ENCODE measurements at regions of chr1 and their contacts with region 1.

Region 1: DNA sequence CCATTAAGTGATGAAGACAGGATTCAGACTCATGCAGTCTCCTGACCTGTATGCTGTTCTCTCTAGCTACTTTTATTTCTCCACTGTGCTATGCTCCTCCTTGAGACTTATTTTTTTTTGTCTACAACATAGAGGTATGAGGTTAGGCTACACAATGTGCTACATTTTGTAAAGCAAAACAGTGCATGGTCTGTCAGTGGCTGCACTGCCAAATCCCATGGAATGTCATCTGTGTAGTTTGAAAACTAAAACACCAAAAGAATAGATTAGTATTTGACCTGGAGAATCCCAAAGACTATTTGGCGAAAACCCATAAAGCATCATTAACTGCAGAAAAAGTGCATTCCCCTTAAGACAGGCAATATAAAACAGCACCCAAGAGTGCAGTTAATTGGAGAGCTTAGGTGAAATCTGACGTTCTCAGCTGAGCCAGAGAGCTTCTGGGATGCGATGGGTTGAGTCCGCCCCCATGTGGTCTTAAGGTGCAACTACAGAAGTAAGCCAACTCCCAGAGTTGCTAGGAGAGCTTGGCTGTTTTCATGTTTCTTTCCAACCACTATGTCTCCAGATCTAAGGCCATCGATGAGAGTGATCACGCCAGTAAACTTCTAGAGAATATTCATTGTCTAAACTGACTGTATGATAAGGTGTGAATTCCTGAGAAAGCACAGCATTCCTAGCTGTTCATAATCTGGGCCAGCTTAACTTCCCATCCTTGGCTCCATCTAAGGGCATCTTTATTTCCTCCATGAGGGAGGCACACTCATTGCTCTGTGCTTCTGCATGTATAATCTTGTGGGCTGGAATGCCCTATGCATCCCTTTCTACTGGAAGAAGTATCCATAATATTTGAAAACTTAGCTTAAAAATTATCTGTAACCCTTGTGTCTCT is 20.7 kb upstream of the CYP2J2 start:
- DNase-seq: peak; percentile 46
- ATAC-seq: peak; percentile 94
- H3K4me3 ChIP-seq: no peak overlapping the region
- H3K27ac ChIP-seq: no peak overlapping the region
- H3K4me1 ChIP-seq: no peaks in the 10 kb centered on the region
- H3K27me3 ChIP-seq: peaks cover 14% of the 10 kb centered on the region; the same call in 1 of the 2 replicates
- CTCF ChIP-seq: peak; percentile 94

Region 2: GRCh38 chr1:59779949-59780348 is 167.3 kb before region 1 on chr1:
- CTCF ChIA-PET with region 1: no interaction called
- POLR2A ChIA-PET with region 1: interaction called, 8 read pairs
- in situ Hi-C with region 1: no loop called
- intact Hi-C with region 1: loop called (anchors 5 kb)
- DNase-seq: no peak
- ATAC-seq: no peak
- H3K4me3 ChIP-seq: no peak overlapping the region
- H3K27ac ChIP-seq: no peak overlapping the region
- H3K4me1 ChIP-seq: no peaks in the 10 kb centered on the region
- H3K27me3 ChIP-seq: no peaks in the 10 kb centered on the region
- CTCF ChIP-seq: peak; percentile 33

Region 3: DNA sequence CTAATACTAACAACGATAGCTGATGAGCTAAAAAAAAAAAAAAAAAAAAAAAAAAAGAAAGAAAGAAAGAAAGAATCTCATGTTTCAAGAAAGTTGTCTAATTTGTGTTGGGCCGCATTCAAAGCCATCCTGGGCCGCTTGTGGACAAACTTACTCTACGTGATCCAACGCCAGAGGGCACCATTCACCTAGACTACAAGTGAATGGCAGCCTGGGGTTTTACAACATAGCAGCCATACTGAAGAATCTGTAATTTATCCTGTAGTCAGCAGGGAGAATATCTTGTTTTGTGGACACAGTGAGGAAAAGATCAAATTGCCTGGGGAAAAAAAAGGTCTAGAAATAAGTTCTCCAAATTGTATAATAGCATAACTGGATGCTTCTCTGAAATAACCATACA is 67.7 kb before region 1 on chr1:
- CTCF ChIA-PET with region 1: interaction called, 30 read pairs
- POLR2A ChIA-PET with region 1: no interaction called
- in situ Hi-C with region 1: no loop called
- intact Hi-C with region 1: loop called (anchors 1 kb)
- DNase-seq: peak; percentile 32
- ATAC-seq: peak; percentile 88
- H3K4me3 ChIP-seq: no peak overlapping the region
- H3K27ac ChIP-seq: no peak overlapping the region
- H3K4me1 ChIP-seq: no peaks in the 10 kb centered on the region; the same call in 1 of the 2 replicates
- H3K27me3 ChIP-seq: no peaks in the 10 kb centered on the region
- CTCF ChIP-seq: peak; percentile 71

Region 4: GRCh38 chr1:59892841-59893811 is 54.2 kb before region 1 on chr1:
- CTCF ChIA-PET with region 1: no interaction called
- POLR2A ChIA-PET with region 1: no interaction called
- in situ Hi-C with region 1: no loop called
- intact Hi-C with region 1: no loop called
- DNase-seq: no peak
- ATAC-seq: no peak
- H3K4me3 ChIP-seq: no peak overlapping the region
- H3K27ac ChIP-seq: no peak overlapping the region
- H3K4me1 ChIP-seq: no peaks in the 10 kb centered on the region
- H3K27me3 ChIP-seq: no peaks in the 10 kb centered on the region; the same call in 1 of the 2 replicates
- CTCF ChIP-seq: no peak

Region 5: DNA sequence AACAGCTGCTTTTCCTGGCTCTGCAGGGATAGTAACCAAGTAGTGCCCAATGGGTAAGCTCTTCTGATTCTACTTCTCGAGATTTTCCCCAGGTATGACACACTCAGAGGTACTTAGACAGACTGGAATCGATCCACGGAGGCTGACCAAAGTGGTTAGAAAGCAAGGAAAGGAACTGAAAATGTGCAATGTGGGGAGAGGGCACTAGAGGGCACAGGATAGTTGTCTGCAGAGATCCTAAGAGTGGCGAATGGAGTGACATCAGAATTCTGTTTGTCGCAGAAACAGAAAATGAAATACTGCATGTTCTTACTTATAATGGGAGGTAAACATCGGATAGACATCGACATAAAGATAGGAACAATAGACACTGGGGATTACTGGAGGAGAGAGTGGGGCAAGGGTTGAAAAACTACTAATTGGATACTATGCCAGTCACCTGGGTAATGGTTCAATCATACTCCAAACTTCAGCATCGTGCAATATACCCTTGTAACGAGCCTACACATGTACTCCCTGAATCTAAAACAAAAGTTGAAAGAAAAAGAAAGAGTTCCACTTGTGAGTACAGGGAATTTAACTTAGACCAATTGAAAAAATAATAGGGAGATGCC is 44.0 kb before region 1 on chr1:
- CTCF ChIA-PET with region 1: interaction called, 5 read pairs
- POLR2A ChIA-PET with region 1: no interaction called
- in situ Hi-C with region 1: no loop called
- intact Hi-C with region 1: loop called (anchors 2 kb)
- DNase-seq: peak; percentile 15
- ATAC-seq: peak; percentile 75; the same call in 1 of the 2 replicates
- H3K4me3 ChIP-seq: no peak overlapping the region
- H3K27ac ChIP-seq: no peak overlapping the region
- H3K4me1 ChIP-seq: no peaks in the 10 kb centered on the region
- H3K27me3 ChIP-seq: peaks cover 6% of the 10 kb centered on the region
- CTCF ChIP-seq: peak; percentile 69